ENCODE measurements at regions of chr9 and their contacts with region 1.

Region 1: GRCh38 chr9:136482793-136483588 is at the start of gene SEC16A:
- DNase-seq: peak; percentile 89
- ATAC-seq: peak; percentile 48
- H3K4me3 ChIP-seq: peak within 1 kb of the TSS; percentile 99
- H3K27ac ChIP-seq: peak within 1 kb of the TSS; percentile 97
- H3K4me1 ChIP-seq: peaks cover 7% of the 10 kb centered on the region; the same call in 1 of the 2 replicates
- H3K27me3 ChIP-seq: no peaks in the 10 kb centered on the region
- CTCF ChIP-seq: no peak
- total RNA-seq, gene SEC16A: 28.3 and 33.5 TPM in 2 replicates

Region 2: DNA sequence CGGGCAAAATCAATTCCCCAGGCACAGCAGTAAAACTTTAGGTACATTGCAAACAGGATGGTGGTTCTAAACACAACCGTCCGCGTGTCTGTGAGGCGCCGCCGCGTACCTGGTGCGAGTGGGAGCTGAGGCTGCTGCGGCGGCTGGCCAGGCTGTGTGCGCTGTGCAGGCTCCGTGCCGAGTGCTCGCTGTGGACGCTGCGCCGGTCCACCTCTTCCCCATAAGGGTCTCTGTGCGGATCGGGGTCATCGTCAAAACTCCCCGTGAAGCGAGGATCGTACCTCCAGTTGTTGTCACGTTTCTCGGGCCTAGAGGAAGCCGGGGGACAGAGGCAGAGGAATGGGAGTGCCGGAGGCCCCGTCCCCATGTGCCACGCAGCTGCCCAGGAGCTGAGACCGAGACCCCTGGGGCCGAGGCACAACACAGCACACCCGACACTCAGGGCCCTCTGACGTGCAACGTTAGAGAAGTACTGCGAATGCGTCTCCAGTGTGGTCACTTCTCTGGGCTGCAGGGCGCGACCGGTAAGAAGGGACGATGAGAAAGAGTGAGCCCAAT is 16.8 kb before region 1 on chr9:
- CTCF ChIA-PET with region 1: no interaction called
- POLR2A ChIA-PET with region 1: interaction called, 21 read pairs
- intact Hi-C with region 1: no loop called
- DNase-seq: no peak
- ATAC-seq: no peak
- H3K4me3 ChIP-seq: no peak overlapping the region
- H3K27ac ChIP-seq: no peak overlapping the region
- H3K4me1 ChIP-seq: no peaks in the 10 kb centered on the region
- H3K27me3 ChIP-seq: no peaks in the 10 kb centered on the region
- CTCF ChIP-seq: no peak

Region 3: DNA sequence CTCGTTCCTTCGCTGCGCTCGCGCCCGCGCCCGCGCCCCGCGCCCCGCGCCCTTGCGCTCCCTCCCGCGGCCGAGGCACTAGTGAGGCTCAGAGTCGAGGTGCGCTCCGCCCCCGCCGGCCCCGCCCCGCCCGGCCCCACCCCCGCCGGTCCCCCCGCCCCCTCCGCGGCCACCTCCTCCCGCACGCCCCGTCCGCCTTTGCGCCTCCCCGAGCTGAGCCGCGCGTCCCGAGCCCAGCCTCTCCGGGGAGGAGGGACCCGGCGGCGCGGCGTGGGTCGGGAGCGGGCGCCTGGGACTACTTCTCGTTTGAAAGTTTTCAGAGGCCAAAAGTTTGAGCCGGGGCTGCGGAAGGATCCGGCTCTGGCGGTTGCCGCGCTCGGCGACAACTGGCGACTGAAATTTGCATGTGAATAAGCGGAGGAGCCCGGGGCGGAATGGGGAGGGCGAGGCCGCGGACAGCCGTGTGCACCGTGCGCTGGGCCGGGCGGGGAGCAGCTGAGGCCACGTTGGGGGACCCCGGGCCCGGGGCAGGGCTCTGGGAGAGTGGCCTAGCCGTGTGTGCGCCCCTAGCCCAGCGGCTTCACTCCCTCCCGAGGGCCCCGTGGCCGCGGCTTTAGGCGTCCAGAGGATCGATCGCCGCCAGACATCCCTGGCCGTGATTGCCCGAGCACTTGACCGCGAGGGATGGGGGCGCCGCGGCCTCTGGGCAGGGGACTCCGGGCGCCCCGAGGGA is 63.1 kb after region 1 on chr9 and contains the start of gene NOTCH1:
- CTCF ChIA-PET with region 1: interaction called, 5 read pairs
- POLR2A ChIA-PET with region 1: no interaction called
- intact Hi-C with region 1: loop called (anchors 10 kb)
- DNase-seq: peak; percentile 81
- ATAC-seq: peak; percentile 79
- H3K4me3 ChIP-seq: peak within 1 kb of the TSS; percentile 83
- H3K27ac ChIP-seq: peak within 1 kb of the TSS; percentile 85
- H3K4me1 ChIP-seq: peaks cover 21% of the 10 kb centered on the region
- H3K27me3 ChIP-seq: no peaks in the 10 kb centered on the region
- CTCF ChIP-seq: no peak
- total RNA-seq, gene NOTCH1: 14.3 and 20.8 TPM in 2 replicates

Region 4: GRCh38 chr9:136694236-136694942 is 211.4 kb after region 1 on chr9:
- CTCF ChIA-PET with region 1: interaction called, 4 read pairs
- POLR2A ChIA-PET with region 1: no interaction called
- intact Hi-C with region 1: loop called (anchors 5 kb)
- DNase-seq: peak; percentile 63
- ATAC-seq: peak; percentile 72
- H3K4me3 ChIP-seq: peak overlapping the region; percentile 58
- H3K27ac ChIP-seq: peak overlapping the region; percentile 98
- H3K4me1 ChIP-seq: peaks cover 35% of the 10 kb centered on the region
- H3K27me3 ChIP-seq: no peaks in the 10 kb centered on the region
- CTCF ChIP-seq: peak; percentile 66

Measured in PC-3 (cell line).